Ovary (tissue), 10 donors: ENCODE measurements at regions of chrX and their contacts with region 1.

Region 1: GRCh38 chrX:108070891-108071290 is 20.5 kb downstream of the PSMD10 start:
- DNase-seq: no peak
- H3K4me3 ChIP-seq: no peak overlapping the region
- H3K27ac ChIP-seq: no peak overlapping the region
- H3K4me1 ChIP-seq: no peaks in the 10 kb centered on the region
- H3K27me3 ChIP-seq: no peaks in the 10 kb centered on the region
- CTCF ChIP-seq: no peak
- EP300 ChIP-seq: no peak
- POLR2A ChIP-seq: no peak

Region 2: DNA sequence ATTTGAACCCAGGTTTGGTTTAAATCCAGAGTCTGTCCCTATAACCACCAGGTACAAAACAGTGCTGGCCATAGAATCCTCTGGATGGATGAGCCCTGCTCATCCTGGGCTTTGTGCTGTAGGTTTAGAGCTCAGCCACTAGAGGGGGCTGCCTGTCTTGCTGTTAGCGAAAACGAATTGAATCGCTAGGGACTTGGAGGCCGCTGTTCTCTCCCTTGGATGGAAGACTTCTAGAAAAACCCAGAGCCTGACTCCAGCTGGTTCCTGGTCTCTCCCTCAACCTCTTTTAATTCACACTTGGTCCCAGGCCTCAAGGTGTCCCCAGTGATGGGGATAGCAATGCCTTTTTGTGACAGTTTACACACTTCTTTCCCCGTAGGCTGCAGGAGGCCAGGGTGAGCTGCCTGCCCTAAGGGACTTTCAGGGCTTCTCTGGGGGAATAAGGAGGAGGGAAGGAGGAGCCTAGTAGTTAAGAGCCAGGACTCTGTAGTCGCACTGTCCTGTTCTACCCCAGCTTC is 1176.4 kb before region 1 on chrX:
- intact Hi-C with region 1: loop called in 1 of 4 experiments (anchors 10 kb)
- DNase-seq: peak; percentile 48 to 68 (median 56)
- H3K4me3 ChIP-seq: no peak overlapping the region
- H3K27ac ChIP-seq: no peak overlapping the region
- H3K4me1 ChIP-seq: no peaks in the 10 kb centered on the region
- H3K27me3 ChIP-seq: no peaks in the 10 kb centered on the region
- CTCF ChIP-seq: peak; percentile 26 to 51 (median 41)
- EP300 ChIP-seq: no peak
- POLR2A ChIP-seq: no peak

Region 3: DNA sequence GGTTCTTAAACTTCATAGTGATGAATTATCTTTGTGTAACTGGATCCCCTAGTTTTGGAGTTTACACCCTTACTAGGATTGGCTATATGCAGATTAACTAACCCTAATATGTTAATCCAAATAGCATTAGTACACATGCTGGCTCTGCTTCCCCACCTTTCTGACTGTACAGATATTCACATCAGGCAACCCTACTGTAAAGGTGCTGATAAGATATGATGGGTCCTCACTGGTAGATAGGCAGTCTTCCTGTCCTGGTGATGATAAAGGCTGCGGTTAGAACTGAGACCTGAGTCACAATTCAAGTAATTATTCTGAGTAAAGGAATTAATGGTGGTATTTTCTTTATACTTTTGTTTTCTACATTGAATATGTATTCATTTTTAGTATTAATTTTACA is 487.3 kb after region 1 on chrX:
- intact Hi-C with region 1: no loop called
- DNase-seq: no peak
- H3K4me3 ChIP-seq: no peak overlapping the region
- H3K27ac ChIP-seq: no peak overlapping the region
- H3K4me1 ChIP-seq: no peaks in the 10 kb centered on the region
- H3K27me3 ChIP-seq: no peaks in the 10 kb centered on the region
- CTCF ChIP-seq: no peak
- EP300 ChIP-seq: no peak
- POLR2A ChIP-seq: no peak